ACHN (cell line): ENCODE measurements at regions of chr3 and their contacts with region 1.

Region 1: GRCh38 chr3:40179016-40179415 is 130.5 kb upstream of the EIF1B start:
- DNase-seq: peak; percentile 50

Region 2: GRCh38 chr3:39013289-39013688 is 1165.7 kb before region 1 on chr3:
- in situ Hi-C with region 1: no loop called
- DNase-seq: no peak

Region 3: DNA sequence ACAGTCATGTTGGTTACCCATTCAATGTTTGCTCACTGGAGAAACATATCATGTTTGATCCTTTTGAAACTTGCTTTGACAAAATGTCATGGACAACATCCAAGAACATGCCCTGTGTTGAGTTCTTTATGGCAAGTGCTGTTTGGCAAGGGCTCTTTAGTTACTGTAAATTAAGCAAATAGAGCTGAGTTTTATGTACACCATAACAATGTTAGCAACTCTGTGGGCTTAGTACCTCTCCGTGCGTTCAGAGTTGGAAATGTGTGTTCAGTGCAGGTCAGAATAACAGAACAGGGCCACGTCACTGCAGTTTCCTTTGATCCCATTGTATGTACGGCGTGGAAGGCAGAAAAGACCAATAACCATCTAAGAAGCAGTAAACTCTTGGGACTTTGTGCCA is 237.1 kb before region 1 on chr3:
- in situ Hi-C with region 1: no loop called
- DNase-seq: no peak

Region 4: DNA sequence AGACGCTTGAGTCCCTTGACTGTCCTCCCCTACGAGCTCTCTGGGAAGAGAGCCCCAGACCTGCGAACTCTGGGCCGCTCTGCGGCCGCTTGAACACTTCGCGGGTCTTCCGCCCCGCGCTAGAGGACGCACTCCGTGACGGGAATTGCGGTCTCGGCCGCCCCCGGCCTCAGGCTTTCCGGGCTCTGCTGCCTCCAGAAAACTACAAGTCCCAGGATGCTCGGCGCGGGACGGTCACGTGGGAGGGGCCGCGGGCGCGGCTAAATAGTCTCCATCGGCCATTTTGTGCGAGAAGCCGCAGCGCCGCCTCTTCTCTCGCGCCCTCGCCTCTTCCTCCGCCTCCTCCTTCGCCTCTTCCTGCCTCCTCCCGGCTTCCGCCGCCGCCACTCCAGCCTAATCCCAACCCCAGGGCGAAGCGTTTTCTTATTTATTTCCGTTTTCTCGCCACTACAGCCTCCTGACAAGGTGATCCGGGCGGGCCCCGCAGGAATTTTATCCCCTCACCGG is 130.5 kb after region 1 on chr3 and contains the start of gene EIF1B:
- in situ Hi-C with region 1: loop called (anchors 25 kb)
- DNase-seq: peak; percentile 96